MCF 10A (cell line): ENCODE measurements at regions of chr5 and their contacts with region 1.

Region 1: DNA sequence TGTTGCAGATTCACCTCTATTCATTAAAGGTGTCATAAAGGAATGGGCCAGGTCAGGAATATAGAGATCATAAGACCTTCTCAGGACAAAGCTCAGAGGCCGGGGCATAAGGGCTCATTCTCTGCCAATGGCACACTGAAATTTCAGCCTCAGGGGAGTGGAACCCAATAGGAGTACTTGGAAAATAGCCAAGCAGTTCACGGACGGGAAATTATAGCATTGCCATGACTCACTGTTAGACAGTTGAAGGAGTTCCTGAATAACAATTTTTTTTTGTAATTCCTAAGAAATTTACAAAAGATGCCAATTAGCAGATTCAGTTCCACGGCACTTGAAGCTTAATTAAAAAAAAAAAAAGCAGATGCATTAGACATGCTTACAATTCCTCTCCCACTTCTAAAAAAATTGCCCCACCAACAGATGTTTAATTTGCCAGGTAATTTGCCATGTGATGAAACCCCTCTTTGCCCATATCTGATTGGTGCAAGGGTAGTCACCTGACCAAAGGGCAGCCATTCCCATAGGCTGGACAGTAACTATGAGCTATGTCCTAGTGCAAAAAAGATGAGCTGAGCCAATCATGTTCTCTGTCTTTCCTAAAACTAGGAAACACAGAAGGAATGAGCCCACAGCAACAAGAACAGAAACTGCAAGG is 58.6 kb downstream of the PTCD2 start:
- DNase-seq: peak; percentile 98
- H3K4me3 Mint-ChIP-seq: peak overlapping the region; percentile 38
- H3K27ac Mint-ChIP-seq: peak overlapping the region; percentile 98
- H3K4me1 Mint-ChIP-seq: peaks cover 40% of the 10 kb centered on the region
- H3K27me3 Mint-ChIP-seq: no peaks in the 10 kb centered on the region
- CTCF ChIP-seq: no peak

Region 2: GRCh38 chr5:72394688-72395087 is 15.9 kb after region 1 on chr5:
- CTCF ChIA-PET with region 1: interaction called, 13 read pairs
- POLR2A ChIA-PET with region 1: interaction called, 60 read pairs
- intact Hi-C with region 1: no loop called
- DNase-seq: peak; percentile 48
- H3K4me3 Mint-ChIP-seq: no peak overlapping the region
- H3K27ac Mint-ChIP-seq: no peak overlapping the region
- H3K4me1 Mint-ChIP-seq: peaks cover 25% of the 10 kb centered on the region
- H3K27me3 Mint-ChIP-seq: no peaks in the 10 kb centered on the region
- CTCF ChIP-seq: no peak

Region 3: DNA sequence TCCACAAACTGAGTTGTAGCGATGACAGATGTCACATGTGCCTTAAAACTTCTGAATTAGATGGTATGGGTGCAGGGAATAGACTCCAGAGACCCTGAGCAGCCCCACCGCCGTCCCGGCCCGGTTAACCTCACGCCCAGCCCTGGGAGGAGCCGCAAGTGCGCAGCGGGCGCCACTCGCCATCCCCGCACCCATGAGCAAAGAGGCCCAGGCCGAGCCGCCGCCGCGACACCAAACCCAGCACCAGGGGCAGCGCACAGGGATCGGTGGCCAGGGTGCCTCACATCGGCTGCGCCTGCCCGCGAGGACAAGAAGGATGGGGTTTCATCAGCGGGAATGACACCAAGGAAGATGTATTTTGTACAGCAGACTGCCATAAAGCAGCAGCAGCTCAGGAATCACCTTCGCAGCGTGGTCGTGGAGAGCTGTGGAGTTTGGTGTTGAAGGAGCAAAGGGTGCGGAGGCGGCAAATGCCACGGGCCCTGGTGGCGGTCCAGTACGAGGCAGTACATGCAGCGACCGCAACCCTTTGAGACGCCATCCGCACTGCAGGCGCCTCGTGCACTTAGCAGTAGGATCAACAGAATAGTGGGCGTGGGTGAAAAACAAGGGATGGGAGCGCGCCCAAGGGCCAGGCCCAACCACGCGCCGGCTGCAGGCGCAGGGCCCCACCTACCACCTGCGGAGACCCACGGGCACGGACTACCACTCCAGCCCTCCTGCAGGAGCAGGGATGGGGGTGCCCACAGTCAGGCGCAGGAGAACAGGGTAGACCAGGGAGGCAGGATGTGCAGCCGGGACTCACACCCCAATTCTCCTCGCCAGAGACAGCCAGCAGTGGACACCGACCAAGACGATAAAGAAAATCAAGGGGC is 38.8 kb after region 1 on chr5:
- CTCF ChIA-PET with region 1: no interaction called
- POLR2A ChIA-PET with region 1: no interaction called
- intact Hi-C with region 1: no loop called
- DNase-seq: no peak
- H3K4me3 Mint-ChIP-seq: no peak overlapping the region
- H3K27ac Mint-ChIP-seq: no peak overlapping the region
- H3K4me1 Mint-ChIP-seq: no peaks in the 10 kb centered on the region
- H3K27me3 Mint-ChIP-seq: no peaks in the 10 kb centered on the region
- CTCF ChIP-seq: no peak

Region 4: DNA sequence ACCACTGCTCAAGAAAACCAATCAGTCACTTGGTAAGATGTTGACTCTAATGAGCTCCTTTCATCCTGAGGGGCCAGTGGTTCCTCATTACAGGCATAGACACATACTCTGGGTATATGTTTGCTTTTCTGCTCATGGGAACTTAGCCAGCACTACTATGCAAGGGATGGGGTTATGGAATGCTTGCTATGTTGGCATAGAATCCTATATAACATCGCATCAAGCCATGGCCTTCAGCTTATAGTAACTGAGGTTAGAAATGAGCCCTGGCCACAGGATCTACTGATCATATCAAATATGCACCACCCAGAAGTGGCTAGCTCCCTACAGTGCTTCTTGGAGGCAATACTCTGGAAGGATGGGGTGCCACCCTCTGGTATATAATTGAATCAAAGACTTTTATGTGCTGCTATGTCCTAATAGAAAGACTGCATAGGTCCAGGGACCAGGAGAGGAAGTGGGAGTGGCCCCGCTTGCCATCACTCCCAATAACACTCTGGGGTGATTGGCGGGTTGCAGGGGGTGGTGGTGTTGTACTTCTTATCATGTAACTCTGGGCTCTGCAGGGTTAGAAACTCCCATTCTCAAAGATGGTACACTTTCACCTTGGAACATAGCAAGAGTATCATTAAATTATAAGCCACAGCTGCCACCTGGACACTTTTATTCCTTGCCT is 58.2 kb after region 1 on chr5:
- CTCF ChIA-PET with region 1: interaction called, 4 read pairs
- POLR2A ChIA-PET with region 1: interaction called, 45 read pairs
- intact Hi-C with region 1: no loop called
- DNase-seq: peak; percentile 38
- H3K4me3 Mint-ChIP-seq: no peak overlapping the region
- H3K27ac Mint-ChIP-seq: peak overlapping the region; percentile 93
- H3K4me1 Mint-ChIP-seq: peaks cover 67% of the 10 kb centered on the region
- H3K27me3 Mint-ChIP-seq: no peaks in the 10 kb centered on the region
- CTCF ChIP-seq: no peak

Region 5: GRCh38 chr5:72465601-72466563 is 87.1 kb after region 1 on chr5:
- CTCF ChIA-PET with region 1: no interaction called
- POLR2A ChIA-PET with region 1: interaction called, 19 read pairs
- intact Hi-C with region 1: no loop called
- DNase-seq: no peak
- H3K4me3 Mint-ChIP-seq: no peak overlapping the region
- H3K27ac Mint-ChIP-seq: peak overlapping the region; percentile 3
- H3K4me1 Mint-ChIP-seq: peaks cover 46% of the 10 kb centered on the region
- H3K27me3 Mint-ChIP-seq: no peaks in the 10 kb centered on the region
- CTCF ChIP-seq: no peak

Region 6: DNA sequence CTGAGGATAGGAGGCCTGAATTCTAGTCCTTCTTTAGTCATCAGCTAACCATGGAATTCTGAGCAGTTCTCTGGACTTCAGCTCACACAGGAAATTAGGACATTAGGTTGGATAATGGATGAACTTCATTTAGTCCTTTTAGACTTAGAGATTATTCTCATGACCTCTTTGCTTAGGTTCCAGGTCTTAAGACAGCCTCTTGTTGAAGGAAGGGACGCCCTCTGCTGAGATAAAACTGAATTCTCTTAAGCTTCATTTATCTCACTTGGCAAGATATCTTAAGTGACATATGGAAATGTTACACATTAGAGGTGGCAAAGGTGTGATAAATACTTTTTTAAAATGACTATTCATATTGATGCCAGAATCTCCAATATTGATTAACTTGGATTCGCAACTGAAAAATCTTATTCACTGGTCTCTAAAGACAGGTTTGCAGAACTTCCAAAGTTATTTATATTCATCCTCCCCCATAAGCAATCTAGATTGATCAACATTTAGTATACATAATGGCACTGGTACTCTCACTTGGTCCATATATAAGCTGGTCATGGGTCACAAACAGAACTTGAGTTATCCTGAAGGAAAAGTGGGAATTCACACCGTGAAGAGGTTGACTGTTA is 145.3 kb after region 1 on chr5:
- CTCF ChIA-PET with region 1: interaction called, 23 read pairs
- POLR2A ChIA-PET with region 1: interaction called, 12 read pairs
- intact Hi-C with region 1: no loop called
- DNase-seq: peak; percentile 78
- H3K4me3 Mint-ChIP-seq: no peak overlapping the region
- H3K27ac Mint-ChIP-seq: no peak overlapping the region
- H3K4me1 Mint-ChIP-seq: peaks cover 12% of the 10 kb centered on the region
- H3K27me3 Mint-ChIP-seq: no peaks in the 10 kb centered on the region
- CTCF ChIP-seq: peak; percentile 67